ENCODE measurements at regions of chrX and their contacts with region 1.

Region 1: GRCh38 chrX:72430405-72430968 is 124.8 kb upstream of the CITED1 start:
- DNase-seq: no peak
- ATAC-seq: no peak
- H3K4me3 ChIP-seq: no peak overlapping the region
- H3K27ac ChIP-seq: no peak overlapping the region
- H3K4me1 ChIP-seq: no peaks in the 10 kb centered on the region
- H3K27me3 ChIP-seq: no peaks in the 10 kb centered on the region
- CTCF ChIP-seq: no peak
- EP300 ChIP-seq: no peak
- POLR2A ChIP-seq: no peak
- RAD21 ChIP-seq: no peak

Region 2: DNA sequence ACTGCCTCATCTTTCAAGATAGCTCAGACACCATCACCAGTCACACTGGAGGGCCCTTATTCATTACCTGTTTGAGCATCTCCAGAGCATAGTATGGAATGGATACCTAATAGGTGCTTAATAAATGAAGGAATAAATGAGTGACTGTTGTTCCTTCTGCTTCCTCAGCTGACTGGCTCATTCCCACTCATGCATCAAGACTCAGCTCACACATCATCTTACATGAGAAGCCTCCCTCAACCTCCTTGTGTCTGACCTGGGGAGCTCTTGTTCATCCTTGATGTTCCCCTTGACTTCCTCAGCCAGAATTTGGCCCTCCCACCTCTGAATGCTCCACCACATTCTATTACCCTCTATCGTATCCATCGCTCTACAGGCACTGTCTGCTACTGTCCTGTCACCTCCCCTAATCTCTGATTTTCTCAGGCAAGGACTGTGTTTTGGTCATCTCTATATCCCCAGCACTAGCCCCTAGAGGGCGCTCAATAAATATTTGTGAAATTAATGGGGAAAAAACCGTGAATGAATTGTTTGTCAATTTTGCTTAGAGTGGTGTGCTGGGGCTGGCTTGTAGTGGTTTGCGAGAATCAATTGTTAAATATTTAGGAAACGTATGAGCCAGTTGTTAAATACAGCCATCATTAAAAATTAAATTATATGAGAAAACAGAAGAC is 431.5 kb before region 1 on chrX:
- CTCF ChIA-PET with region 1: no interaction called
- POLR2A ChIA-PET with region 1: no interaction called
- in situ Hi-C with region 1: no loop called
- intact Hi-C with region 1: no loop called
- DNase-seq: peak; percentile 12
- ATAC-seq: peak; percentile 66
- H3K4me3 ChIP-seq: no peak overlapping the region
- H3K27ac ChIP-seq: no peak overlapping the region
- H3K4me1 ChIP-seq: no peaks in the 10 kb centered on the region
- H3K27me3 ChIP-seq: peaks cover 0 to 1% of the 10 kb centered on the region in 2 experiments; a peak in 1 of 5 replicates
- CTCF ChIP-seq: peak; percentile 43
- EP300 ChIP-seq: no peak
- POLR2A ChIP-seq: no peak
- RAD21 ChIP-seq: no peak

Region 3: GRCh38 chrX:72475952-72476668 is 45.6 kb after region 1 on chrX:
- CTCF ChIA-PET with region 1: no interaction called
- POLR2A ChIA-PET with region 1: no interaction called
- in situ Hi-C with region 1: no loop called
- intact Hi-C with region 1: no loop called
- DNase-seq: no peak
- ATAC-seq: no peak
- H3K4me3 ChIP-seq: no peak overlapping the region
- H3K27ac ChIP-seq: no peak overlapping the region
- H3K4me1 ChIP-seq: peaks cover 27% of the 10 kb centered on the region
- H3K27me3 ChIP-seq: no peaks in the 10 kb centered on the region
- CTCF ChIP-seq: no peak
- EP300 ChIP-seq: no peak
- POLR2A ChIP-seq: no peak
- RAD21 ChIP-seq: no peak

Region 4: DNA sequence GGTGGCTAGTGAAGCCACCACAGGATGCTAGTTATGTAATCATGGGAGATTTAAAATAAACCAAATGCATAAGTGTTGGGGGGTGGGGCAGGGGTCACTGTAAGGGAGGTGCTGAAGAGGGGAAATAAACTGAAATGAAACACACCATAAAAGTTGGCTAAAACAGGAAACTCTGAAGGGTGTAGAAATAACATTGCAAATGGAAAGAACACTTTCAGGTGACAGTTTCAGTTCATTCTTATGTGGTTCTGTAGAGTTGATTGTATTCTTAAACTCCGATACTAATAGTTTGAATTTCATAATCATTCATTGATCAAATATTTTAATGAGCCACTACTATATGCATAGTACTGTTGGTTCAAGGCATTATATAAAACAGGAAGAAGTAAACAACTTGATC is 62.0 kb after region 1 on chrX:
- CTCF ChIA-PET with region 1: no interaction called
- POLR2A ChIA-PET with region 1: no interaction called
- in situ Hi-C with region 1: no loop called
- intact Hi-C with region 1: loop called (anchors 2 kb)
- DNase-seq: no peak
- ATAC-seq: no peak
- H3K4me3 ChIP-seq: no peak overlapping the region
- H3K27ac ChIP-seq: no peak overlapping the region
- H3K4me1 ChIP-seq: no peaks in the 10 kb centered on the region
- H3K27me3 ChIP-seq: no peaks in the 10 kb centered on the region
- CTCF ChIP-seq: no peak
- EP300 ChIP-seq: no peak
- POLR2A ChIP-seq: no peak
- RAD21 ChIP-seq: no peak